Transverse colon (tissue), 4 donors: ENCODE measurements at regions of chr17 and their contacts with region 1.

Region 1: GRCh38 chr17:29401258-29401657 is 11.1 kb downstream of the TAOK1 start:
- DNase-seq: no peak
- H3K4me3 ChIP-seq: no peak overlapping the region
- H3K27ac ChIP-seq: no peak overlapping the region
- H3K4me1 ChIP-seq: peaks cover 0 to 17% (median 2%) of the 10 kb centered on the region in 4 donors
- H3K27me3 ChIP-seq: no peaks in the 10 kb centered on the region
- CTCF ChIP-seq: no peak
- EP300 ChIP-seq: no peak
- POLR2A ChIP-seq: no peak

Region 2: GRCh38 chr17:29451121-29451742 is 50.0 kb after region 1 on chr17:
- in situ Hi-C with region 1: no loop called
- intact Hi-C with region 1: loop called (anchors 10 kb)
- DNase-seq: no peak
- H3K4me3 ChIP-seq: no peak overlapping the region
- H3K27ac ChIP-seq: no peak overlapping the region
- H3K4me1 ChIP-seq: peaks cover 0 to 27% (median 3%) of the 10 kb centered on the region in 4 donors
- H3K27me3 ChIP-seq: no peaks in the 10 kb centered on the region
- CTCF ChIP-seq: no peak
- EP300 ChIP-seq: no peak
- POLR2A ChIP-seq: no peak

Region 3: GRCh38 chr17:29495011-29495410 is 93.8 kb after region 1 on chr17:
- in situ Hi-C with region 1: no loop called
- intact Hi-C with region 1: no loop called
- DNase-seq: no peak
- H3K4me3 ChIP-seq: no peak overlapping the region
- H3K27ac ChIP-seq: no peak overlapping the region
- H3K4me1 ChIP-seq: no peaks in the 10 kb centered on the region
- H3K27me3 ChIP-seq: no peaks in the 10 kb centered on the region
- CTCF ChIP-seq: no peak
- EP300 ChIP-seq: no peak
- POLR2A ChIP-seq: no peak